Colonic mucosa (tissue), 4 donors: ENCODE measurements at regions of chr3 and their contacts with region 1.

Region 1: DNA sequence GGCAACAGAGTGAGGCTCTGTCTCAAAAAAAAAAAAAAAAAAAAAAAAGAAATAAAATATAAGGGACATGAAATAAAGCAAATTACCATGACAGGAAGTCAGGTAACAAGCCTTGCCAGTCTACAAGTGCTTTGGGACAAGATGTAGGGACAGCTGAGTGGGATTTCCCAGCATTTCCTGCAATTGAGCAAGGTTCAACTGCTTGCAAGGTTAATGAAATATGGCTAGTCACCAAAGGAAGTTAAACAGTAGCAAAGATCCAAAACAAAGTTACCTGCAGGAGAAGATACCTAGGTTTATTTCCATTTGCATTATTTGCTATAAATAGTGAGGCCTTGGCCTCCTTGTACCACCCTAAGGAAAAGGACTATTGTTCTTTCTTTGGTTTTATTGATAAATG is 22.3 kb upstream of the CNOT10 start:
- DNase-seq: no peak
- H3K4me3 ChIP-seq: no peak overlapping the region
- H3K27ac ChIP-seq: no peak overlapping the region
- H3K4me1 ChIP-seq: no peaks in the 10 kb centered on the region
- H3K27me3 ChIP-seq: no peaks in the 10 kb centered on the region
- CTCF ChIP-seq: no peak

Region 2: GRCh38 chr3:32508711-32509110 is 153.9 kb before region 1 on chr3:
- intact Hi-C with region 1: loop called (anchors 5 kb)
- DNase-seq: peak; percentile 53
- H3K4me3 ChIP-seq: no peak overlapping the region
- H3K27ac ChIP-seq: no peak overlapping the region
- H3K4me1 ChIP-seq: no peaks in the 10 kb centered on the region
- H3K27me3 ChIP-seq: no peaks in the 10 kb centered on the region
- CTCF ChIP-seq: no peak